ENCODE measurements at regions of chr5 and their contacts with region 1.

Region 1: DNA sequence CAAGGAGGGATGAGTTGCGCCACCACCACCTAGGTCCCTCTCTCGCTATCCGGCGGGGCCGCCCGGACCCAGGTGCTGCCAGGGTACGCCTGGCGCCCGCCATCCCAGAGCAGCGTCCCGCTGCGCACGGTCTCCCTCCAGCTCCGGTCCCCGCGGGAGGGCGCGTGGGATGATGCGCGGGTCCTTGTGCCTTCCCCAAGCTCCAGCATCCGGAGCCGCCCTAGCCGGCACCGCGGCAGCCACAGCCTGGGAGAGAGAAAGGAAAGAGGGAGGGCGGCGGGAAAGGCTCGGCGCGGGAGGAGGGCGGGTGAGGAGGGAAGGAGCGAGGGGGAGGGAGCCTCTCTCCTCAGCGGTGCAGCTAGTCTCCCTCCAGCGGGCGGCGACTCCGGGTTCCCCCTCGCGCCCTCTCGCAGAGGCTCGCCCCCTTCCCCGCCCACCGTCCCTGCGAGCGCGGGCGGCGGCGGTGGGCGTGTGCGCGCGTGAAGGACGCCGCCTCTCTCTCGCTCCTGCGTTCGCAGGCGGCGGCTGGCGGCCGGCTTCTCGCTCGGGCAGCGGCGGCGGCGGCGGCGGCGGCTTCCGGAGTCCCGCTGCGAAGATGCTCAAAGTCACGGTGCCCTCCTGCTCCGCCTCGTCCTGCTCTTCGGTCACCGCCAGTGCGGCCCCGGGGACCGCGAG is at the start of gene CAMK4:
- DNase-seq: peak; percentile 82
- H3K4me3 Mint-ChIP-seq: peak within 1 kb of the TSS; percentile 98
- H3K27ac Mint-ChIP-seq: peak within 1 kb of the TSS; percentile 87
- H3K4me1 Mint-ChIP-seq: peaks cover 28% of the 10 kb centered on the region
- H3K27me3 Mint-ChIP-seq: peaks cover 2% of the 10 kb centered on the region
- total RNA-seq, gene CAMK4: 138 to 139 TPM

Region 2: GRCh38 chr5:111237470-111237869 is 13.4 kb after region 1 on chr5:
- CTCF ChIA-PET with region 1: interaction called, 20 read pairs
- POLR2A ChIA-PET with region 1: interaction called, 6 read pairs
- DNase-seq: no peak
- H3K4me3 Mint-ChIP-seq: peak overlapping the region; percentile 61
- H3K27ac Mint-ChIP-seq: peak overlapping the region; percentile 93
- H3K4me1 Mint-ChIP-seq: peaks cover 86% of the 10 kb centered on the region
- H3K27me3 Mint-ChIP-seq: no peaks in the 10 kb centered on the region

Region 3: GRCh38 chr5:111308951-111309350 is 84.9 kb after region 1 on chr5:
- CTCF ChIA-PET with region 1: no interaction called
- POLR2A ChIA-PET with region 1: no interaction called
- DNase-seq: no peak
- H3K4me3 Mint-ChIP-seq: no peak overlapping the region
- H3K27ac Mint-ChIP-seq: no peak overlapping the region
- H3K4me1 Mint-ChIP-seq: peaks cover 35% of the 10 kb centered on the region
- H3K27me3 Mint-ChIP-seq: no peaks in the 10 kb centered on the region